ENCODE measurements at regions of chrX and their contacts with region 1.

Region 1: DNA sequence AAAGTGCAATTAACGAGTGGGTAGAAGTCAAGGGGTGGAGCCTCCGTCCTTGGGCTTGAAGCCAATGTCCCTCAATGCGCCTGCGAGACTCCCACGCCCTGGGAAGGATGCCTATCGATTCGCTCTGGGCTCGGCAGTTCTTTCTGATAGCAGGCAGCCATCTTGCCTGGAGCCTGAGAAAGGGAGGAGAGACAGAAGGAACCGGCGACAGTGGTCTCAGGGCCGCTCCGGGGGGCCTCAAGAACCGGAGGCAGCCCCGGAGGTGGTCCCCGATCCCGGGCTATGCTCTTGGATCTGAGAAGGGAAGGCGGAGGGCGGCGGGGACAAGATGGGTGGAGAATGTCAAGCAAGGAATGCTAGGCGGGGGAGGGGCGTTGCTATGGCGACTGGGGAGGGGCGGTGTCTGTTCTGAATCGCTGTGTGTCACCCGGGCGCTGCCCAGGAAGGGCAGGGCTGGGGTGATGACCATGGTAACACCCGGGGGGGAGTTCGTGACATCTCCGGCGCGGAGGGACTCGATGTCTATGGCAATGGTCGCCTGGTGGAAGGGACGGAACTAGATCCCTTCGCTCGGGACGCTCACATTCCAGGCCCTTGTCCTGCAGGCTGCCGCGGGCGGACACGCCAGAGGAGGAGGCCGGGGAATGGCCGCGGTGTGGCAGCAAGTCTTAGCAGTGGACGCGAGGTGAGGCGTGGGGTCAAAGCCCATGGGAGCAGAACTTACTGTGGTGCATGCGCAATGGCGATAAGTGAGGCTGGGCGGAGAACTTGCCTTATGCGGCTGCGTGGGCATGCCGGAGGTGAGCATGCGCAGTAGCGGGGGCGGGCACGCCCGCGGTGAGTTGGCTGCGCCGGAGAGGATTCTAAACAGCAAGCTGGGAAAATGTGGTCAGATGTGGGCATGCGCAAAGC is at the start of gene WDR13:
- DNase-seq: peak; percentile 87
- H3K4me3 Mint-ChIP-seq: peak within 1 kb of the TSS; percentile 88
- H3K27ac Mint-ChIP-seq: peak within 1 kb of the TSS; percentile 94
- H3K4me1 Mint-ChIP-seq: peaks cover 12% of the 10 kb centered on the region
- H3K27me3 Mint-ChIP-seq: no peaks in the 10 kb centered on the region
- total RNA-seq, gene WDR13: 36.3 and 36.5 TPM in 2 replicates

Region 2: DNA sequence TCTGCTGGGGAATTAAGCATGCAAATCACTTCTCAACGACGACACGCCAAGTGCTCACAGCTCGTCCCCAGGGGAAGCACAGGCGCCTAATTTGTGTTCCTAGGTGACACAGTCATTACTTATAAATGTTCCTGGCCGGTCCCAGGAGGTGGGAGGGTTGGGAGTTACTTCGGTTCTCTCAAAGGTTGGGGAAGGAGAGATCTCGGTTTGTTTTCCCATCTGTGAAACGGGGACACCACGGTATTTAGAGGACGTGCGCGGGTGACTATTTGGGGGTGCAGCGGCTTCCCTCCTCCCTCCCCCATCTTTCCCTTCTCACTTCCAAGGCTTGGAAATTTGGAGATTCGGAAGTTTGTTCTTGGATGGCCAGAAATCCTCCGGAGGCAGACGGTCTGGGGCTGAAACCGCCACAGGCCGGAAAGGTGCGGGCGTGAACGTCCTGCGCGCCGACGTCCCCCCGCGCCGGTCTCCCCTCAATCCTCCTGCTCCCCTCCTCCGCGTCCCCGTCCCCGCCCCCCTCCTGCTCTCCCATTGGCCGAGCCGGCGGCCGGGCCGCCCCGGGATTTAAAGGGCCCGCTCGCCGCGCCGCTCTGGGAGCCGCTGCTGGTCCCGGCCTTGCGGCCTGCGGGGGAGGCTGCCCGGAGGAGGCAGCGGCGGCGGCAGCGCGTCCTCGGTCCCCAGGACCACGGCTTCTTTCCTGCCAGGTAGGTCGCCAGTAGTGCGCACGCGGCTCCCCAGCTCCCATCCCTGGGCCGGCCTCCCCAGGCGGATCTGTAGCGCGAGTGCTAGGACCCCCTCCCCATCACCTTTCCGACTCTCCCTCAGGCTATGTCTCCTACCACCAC is 89.0 kb before region 1 on chrX and contains the start of gene PORCN:
- intact Hi-C with region 1: loop called (anchors 1 kb)
- DNase-seq: peak; percentile 73
- H3K4me3 Mint-ChIP-seq: peak within 1 kb of the TSS; percentile 93
- H3K27ac Mint-ChIP-seq: peak within 1 kb of the TSS; percentile 90
- H3K4me1 Mint-ChIP-seq: peaks cover 21% of the 10 kb centered on the region
- H3K27me3 Mint-ChIP-seq: no peaks in the 10 kb centered on the region
- total RNA-seq, gene PORCN: 13.6 and 15.1 TPM in 2 replicates

Region 3: DNA sequence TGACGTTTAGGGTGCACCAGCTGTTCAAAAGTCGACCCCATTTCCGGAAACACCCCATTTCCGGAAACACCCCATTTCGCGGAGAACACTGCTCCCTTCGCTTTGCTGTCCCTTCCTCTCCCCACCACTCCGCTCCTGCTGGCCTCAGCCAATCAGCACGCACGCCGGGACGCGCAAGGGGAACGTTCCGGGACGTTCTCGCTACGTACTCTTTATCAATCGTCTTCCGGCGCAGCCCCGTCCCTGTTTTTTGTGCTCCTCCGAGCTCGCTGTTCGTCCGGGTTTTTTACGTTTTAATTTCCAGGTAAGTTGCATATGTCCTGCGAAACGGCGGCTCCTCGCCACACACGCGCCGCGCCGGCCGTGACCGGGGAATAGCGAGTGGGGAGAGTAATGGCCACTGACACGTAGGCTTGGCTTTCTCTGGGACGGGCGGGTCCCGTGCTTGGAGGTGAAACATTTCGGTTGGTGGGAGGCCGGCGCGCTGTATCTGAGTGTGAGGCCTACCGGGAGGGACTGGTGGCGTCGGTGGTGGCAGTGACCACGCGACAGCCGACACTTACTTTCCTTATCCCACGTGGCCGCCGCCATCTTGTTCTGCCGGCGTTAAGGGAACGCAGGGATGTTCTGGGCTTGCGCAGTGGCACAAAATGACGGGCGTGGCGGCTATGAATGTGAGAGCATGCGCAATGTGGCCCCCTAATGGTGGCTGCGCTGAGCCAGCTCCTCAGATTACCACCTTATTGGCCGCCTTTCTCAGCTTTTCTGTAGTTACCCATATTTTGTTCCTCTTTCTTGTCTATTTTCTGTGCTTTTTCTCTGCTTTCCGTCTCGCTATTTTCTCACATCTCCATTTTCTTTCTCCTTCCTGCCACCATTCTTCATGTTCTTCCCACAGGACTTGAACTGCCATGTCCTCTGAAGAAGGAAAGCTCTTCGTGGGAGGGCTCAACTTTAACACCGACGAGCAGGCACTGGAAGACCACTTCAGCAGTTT is 23.0 kb before region 1 on chrX and contains the start of gene RBM3:
- intact Hi-C with region 1: loop called (anchors 1 kb)
- DNase-seq: peak; percentile 89
- H3K4me3 Mint-ChIP-seq: peak within 1 kb of the TSS; percentile 99
- H3K27ac Mint-ChIP-seq: peak within 1 kb of the TSS; percentile 100
- H3K4me1 Mint-ChIP-seq: peaks cover 19% of the 10 kb centered on the region
- H3K27me3 Mint-ChIP-seq: no peaks in the 10 kb centered on the region
- total RNA-seq, gene RBM3: 318 and 338 TPM in 2 replicates

Region 4: GRCh38 chrX:48665991-48666390 is 68.4 kb after region 1 on chrX:
- intact Hi-C with region 1: no loop called
- DNase-seq: no peak
- H3K4me3 Mint-ChIP-seq: no peak overlapping the region
- H3K27ac Mint-ChIP-seq: no peak overlapping the region
- H3K4me1 Mint-ChIP-seq: peaks cover 5% of the 10 kb centered on the region
- H3K27me3 Mint-ChIP-seq: no peaks in the 10 kb centered on the region

Region 5: GRCh38 chrX:48696301-48697181 is 98.9 kb after region 1 on chrX and contains the start of gene SUV39H1:
- intact Hi-C with region 1: loop called (anchors 5 kb)
- DNase-seq: peak; percentile 85
- H3K4me3 Mint-ChIP-seq: peak within 1 kb of the TSS; percentile 93
- H3K27ac Mint-ChIP-seq: peak within 1 kb of the TSS; percentile 91
- H3K4me1 Mint-ChIP-seq: peaks cover 35% of the 10 kb centered on the region
- H3K27me3 Mint-ChIP-seq: peaks cover 2% of the 10 kb centered on the region
- total RNA-seq, gene SUV39H1: 27.5 and 27.7 TPM in 2 replicates

Region 6: GRCh38 chrX:48957827-48958634 is 360.4 kb after region 1 on chrX:
- intact Hi-C with region 1: loop called (anchors 1 kb)
- DNase-seq: peak; percentile 90
- H3K4me3 Mint-ChIP-seq: peak overlapping the region; percentile 98
- H3K27ac Mint-ChIP-seq: peak overlapping the region; percentile 100
- H3K4me1 Mint-ChIP-seq: peaks cover 33% of the 10 kb centered on the region
- H3K27me3 Mint-ChIP-seq: no peaks in the 10 kb centered on the region

Region 7: GRCh38 chrX:49922291-49923241 is 1325.0 kb after region 1 on chrX and contains the start of gene CLCN5:
- intact Hi-C with region 1: loop called (anchors 10 kb)
- DNase-seq: peak; percentile 91
- H3K4me3 Mint-ChIP-seq: peak within 1 kb of the TSS; percentile 84
- H3K27ac Mint-ChIP-seq: peak within 1 kb of the TSS; percentile 58
- H3K4me1 Mint-ChIP-seq: peaks cover 12% of the 10 kb centered on the region
- H3K27me3 Mint-ChIP-seq: peaks cover 2% of the 10 kb centered on the region
- total RNA-seq, gene CLCN5: 2.8 and 5.5 TPM in 2 replicates

Region 8: GRCh38 chrX:50594788-50595187 is 1997.2 kb after region 1 on chrX:
- intact Hi-C with region 1: no loop called
- DNase-seq: no peak
- H3K4me3 Mint-ChIP-seq: no peak overlapping the region
- H3K27ac Mint-ChIP-seq: no peak overlapping the region
- H3K4me1 Mint-ChIP-seq: no peaks in the 10 kb centered on the region
- H3K27me3 Mint-ChIP-seq: no peaks in the 10 kb centered on the region

Measured in activated T-helper 1 cell treated with anti-CD3 and anti-CD28 coated beads, Interleukin-12 subunit alpha, Interleukin-12 subunit beta, Interleukin-2, Interleukin-4 antibody, amounts not matched to agents 30 ng/mL and 10 ng/mL and 1 ng/mL, durations not matched to agents 14 hours and 24 hours and 36 hours (primary cell).